ENCODE measurements at regions of chr13 and their contacts with region 1.

Region 1: DNA sequence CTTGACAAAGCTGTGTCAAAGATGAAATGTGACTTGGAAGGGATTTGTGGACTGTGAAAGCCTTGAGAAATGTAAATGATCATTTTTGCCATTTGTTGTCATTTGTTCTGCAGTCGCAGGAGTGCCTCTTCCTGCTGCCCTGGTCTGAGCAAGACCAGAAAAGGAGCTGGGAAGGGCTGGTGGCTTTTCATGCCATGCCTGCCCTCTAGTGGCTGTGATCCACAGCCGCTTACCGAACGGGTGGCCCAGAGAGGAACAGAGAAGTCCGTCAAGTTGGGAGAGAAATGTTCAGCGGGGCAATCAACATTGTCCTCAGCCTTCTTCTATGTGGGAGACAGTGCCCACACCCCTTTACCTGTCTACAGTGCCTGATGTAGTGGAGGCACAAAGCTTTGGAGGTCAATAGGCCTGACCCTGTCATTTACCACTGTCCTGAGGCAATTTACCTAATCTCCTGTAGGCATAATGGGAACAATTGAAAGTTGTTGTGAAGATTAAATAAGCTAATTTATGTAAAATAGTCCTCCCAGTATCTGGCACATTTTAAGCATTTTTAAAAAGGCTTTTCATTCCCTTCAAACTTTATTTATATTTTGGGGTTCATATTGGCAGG is 224.4 kb downstream of the B3GLCT start:
- DNase-seq: peak; percentile 78 to 91
- H3K4me3 ChIP-seq: no peak overlapping the region
- H3K27ac ChIP-seq: no peak overlapping the region
- H3K4me1 ChIP-seq: peaks cover 0 to 10% (median 6%) of the 10 kb centered on the region in 4 donors
- H3K27me3 ChIP-seq: no peaks in the 10 kb centered on the region
- CTCF ChIP-seq: peak in 5 of 7 experiments; percentile 69 to 81 (median 73)
- EP300 ChIP-seq: no peak
- POLR2A ChIP-seq: no peak

Region 2: DNA sequence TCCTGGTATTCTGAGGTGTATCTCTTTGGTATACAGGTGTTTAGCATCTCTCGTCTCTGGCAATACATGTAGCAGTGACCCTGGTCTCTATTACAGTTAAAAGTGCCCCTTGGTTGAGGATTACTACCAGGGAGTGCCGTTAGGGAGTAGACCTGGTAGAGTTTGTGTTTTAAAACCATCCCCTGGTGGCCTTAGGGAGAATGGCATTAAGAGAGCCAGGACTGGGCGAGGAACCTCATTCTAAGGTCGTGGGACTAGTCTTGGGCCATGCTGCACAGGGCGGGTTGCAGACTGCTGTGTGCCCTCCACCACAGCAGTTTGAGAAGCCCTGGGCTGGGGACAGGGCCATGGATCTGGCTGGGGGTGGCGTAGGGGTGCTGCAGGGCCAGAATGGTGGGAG is 189.5 kb before region 1 on chr13:
- intact Hi-C with region 1: loop called (anchors 5 kb)
- DNase-seq: no peak
- H3K4me3 ChIP-seq: no peak overlapping the region
- H3K27ac ChIP-seq: no peak overlapping the region
- H3K4me1 ChIP-seq: no peaks in the 10 kb centered on the region
- H3K27me3 ChIP-seq: no peaks in the 10 kb centered on the region
- CTCF ChIP-seq: peak in 1 of 7 experiments; percentile 10
- EP300 ChIP-seq: no peak
- POLR2A ChIP-seq: no peak

Region 3: GRCh38 chr13:31485651-31486051 is 61.4 kb after region 1 on chr13:
- intact Hi-C with region 1: no loop called
- DNase-seq: peak in 1 of 2 donors; percentile 23
- H3K4me3 ChIP-seq: no peak overlapping the region
- H3K27ac ChIP-seq: no peak overlapping the region
- H3K4me1 ChIP-seq: peaks cover 0 to 13% (median 8%) of the 10 kb centered on the region in 4 donors
- H3K27me3 ChIP-seq: no peaks in the 10 kb centered on the region
- CTCF ChIP-seq: no peak
- EP300 ChIP-seq: no peak
- POLR2A ChIP-seq: no peak

Region 4: DNA sequence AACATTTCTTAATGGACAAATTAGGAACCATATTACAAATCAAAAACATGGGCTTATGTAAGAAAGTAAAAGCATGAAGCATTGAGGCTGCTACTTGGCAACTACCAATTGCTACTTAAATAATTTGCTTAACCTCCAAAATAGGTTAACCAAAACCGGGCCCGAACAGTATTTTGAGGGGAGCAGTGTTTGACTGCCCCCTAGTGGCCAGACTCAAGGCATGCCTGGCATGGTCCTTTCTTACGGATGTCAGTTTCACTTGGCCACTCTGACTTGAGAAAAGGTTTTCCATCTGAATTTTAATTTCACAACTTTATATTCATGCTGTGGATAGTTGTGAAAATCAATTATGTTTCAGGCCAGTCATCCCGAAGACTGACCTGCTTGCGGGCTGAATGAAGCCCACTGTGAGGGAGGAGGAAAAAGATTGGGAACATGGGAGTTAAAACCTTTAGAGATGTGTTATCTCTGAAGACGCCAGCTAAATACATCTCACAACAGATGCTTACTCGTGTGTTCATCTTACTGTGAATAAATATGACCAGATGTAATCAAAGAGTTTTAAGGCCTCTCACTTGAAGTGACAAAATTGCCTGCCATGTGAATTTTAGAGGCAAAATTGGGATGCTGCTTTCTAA is 318.0 kb after region 1 on chr13:
- intact Hi-C with region 1: loop called (anchors 5 kb)
- DNase-seq: peak; percentile 68 to 87
- H3K4me3 ChIP-seq: no peak overlapping the region
- H3K27ac ChIP-seq: no peak overlapping the region
- H3K4me1 ChIP-seq: peaks cover 0 to 7% (median 2%) of the 10 kb centered on the region in 4 donors
- H3K27me3 ChIP-seq: peaks cover 0 to 4% (median 0%) of the 10 kb centered on the region in 3 donors
- CTCF ChIP-seq: peak in 6 of 7 experiments; percentile 55 to 99 (median 88)
- EP300 ChIP-seq: no peak
- POLR2A ChIP-seq: no peak